ENCODE measurements at regions of chr2 and their contacts with region 1.

Region 1: GRCh38 chr2:224357098-224357901 is 44.6 kb downstream of the FAM124B start:
- DNase-seq: peak; percentile 75
- CTCF ChIP-seq: peak; percentile 50

Region 2: GRCh38 chr2:224498991-224499390 is 141.7 kb after region 1 on chr2:
- in situ Hi-C with region 1: no loop called
- DNase-seq: no peak
- CTCF ChIP-seq: no peak

Region 3: GRCh38 chr2:224650815-224651439 is 293.6 kb after region 1 on chr2:
- in situ Hi-C with region 1: loop called (anchors 5 kb)
- DNase-seq: peak; percentile 58
- CTCF ChIP-seq: peak; percentile 62

Region 4: DNA sequence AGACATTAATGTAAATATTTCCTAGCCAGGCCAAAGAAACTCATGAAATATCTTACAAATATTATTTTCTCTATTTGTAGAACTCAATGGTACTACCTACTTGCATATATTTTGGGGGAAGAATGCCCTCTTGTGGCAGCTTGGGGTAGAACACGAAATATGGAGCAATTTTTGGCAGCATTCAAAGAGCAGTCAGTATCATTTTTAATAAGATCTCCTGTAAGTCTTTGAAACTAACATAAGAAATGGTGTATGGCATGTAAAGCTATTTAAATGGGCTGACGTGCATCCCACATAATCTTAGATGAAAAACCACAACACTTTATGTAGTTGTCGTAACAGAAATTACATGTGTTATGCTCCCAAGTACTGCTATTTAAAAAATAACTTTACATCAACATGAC is 421.2 kb after region 1 on chr2:
- in situ Hi-C with region 1: loop called (anchors 10 kb)
- DNase-seq: peak; percentile 63
- CTCF ChIP-seq: peak; percentile 83

Measured in GM13976 (cell line).